ENCODE measurements at regions of chr12 and their contacts with region 1.

Region 1: GRCh38 chr12:120317224-120318105 is 10.1 kb downstream of the PLA2G1B start:
- DNase-seq: peak; percentile 100
- H3K4me3 Mint-ChIP-seq: peak overlapping the region; percentile 90
- H3K27ac Mint-ChIP-seq: peak overlapping the region; percentile 88
- H3K4me1 Mint-ChIP-seq: peaks cover 13% of the 10 kb centered on the region
- H3K27me3 Mint-ChIP-seq: no peaks in the 10 kb centered on the region

Region 2: DNA sequence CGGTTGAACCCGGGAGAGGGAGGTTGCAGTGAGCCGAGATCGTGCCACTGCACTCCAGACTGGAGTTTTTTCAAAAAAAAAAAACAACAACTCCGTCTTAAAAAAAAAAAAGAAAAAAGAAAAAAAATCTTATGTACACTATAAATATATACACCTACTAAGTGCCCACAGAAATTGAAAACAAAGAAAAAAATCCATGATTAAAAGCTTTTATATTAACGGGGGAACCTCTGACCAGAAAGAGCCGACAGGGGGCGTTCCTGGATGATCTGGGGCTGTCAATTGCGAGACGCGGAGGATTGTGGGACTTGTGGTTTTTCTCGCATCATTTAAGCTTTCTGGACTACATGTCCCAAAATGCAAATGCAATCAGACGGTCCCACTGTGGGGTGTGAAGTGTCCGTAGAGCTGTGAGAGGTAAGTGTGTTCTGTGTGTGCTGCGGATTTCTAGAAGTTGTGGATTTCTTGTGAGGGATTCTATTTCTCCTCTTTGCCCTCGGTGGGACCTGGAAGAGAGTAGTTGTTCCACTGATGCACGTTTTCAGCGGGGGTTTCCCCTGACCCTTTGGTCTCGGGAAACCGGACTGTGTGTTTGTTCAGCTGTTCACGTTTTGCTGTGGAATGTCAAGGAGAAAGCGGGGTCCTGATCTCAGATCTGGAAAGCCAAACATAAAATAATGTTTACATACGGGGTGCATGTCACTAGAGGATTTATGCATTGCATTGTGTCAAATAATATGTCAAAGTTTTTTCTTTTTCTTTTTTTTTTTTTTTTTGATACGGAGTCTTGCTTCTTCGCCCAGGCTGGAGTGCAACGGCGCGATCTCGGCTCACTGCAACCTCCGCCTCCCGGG is 15.3 kb before region 1 on chr12 and contains the start of gene SIRT4:
- CTCF ChIA-PET with region 1: interaction called, 25 read pairs
- POLR2A ChIA-PET with region 1: interaction called, 9 read pairs
- intact Hi-C with region 1: loop called (anchors 1 kb)
- DNase-seq: peak; percentile 92
- H3K4me3 Mint-ChIP-seq: peak within 1 kb of the TSS; percentile 90
- H3K27ac Mint-ChIP-seq: peak within 1 kb of the TSS; percentile 70
- H3K4me1 Mint-ChIP-seq: peaks cover 8% of the 10 kb centered on the region
- H3K27me3 Mint-ChIP-seq: no peaks in the 10 kb centered on the region
- total RNA-seq, gene SIRT4: 1.8 to 2.0 TPM

Region 3: GRCh38 chr12:120327593-120327992 is 10.1 kb after region 1 on chr12 and contains the start of gene PLA2G1B:
- CTCF ChIA-PET with region 1: interaction called, 7 read pairs
- POLR2A ChIA-PET with region 1: interaction called, 4 read pairs
- intact Hi-C with region 1: loop called (anchors 1 kb)
- DNase-seq: no peak
- H3K4me3 Mint-ChIP-seq: no peak within 1 kb of the TSS
- H3K27ac Mint-ChIP-seq: no peak within 1 kb of the TSS
- H3K4me1 Mint-ChIP-seq: peaks cover 2% of the 10 kb centered on the region
- H3K27me3 Mint-ChIP-seq: peaks cover 2% of the 10 kb centered on the region
- total RNA-seq, gene PLA2G1B: not detected

Region 4: GRCh38 chr12:120528861-120529525 is 211.5 kb after region 1 on chr12 and contains the start of gene COQ5:
- CTCF ChIA-PET with region 1: no interaction called
- POLR2A ChIA-PET with region 1: no interaction called
- intact Hi-C with region 1: loop called (anchors 2 kb)
- DNase-seq: peak; percentile 91
- H3K4me3 Mint-ChIP-seq: peak within 1 kb of the TSS; percentile 100
- H3K27ac Mint-ChIP-seq: peak within 1 kb of the TSS; percentile 97
- H3K4me1 Mint-ChIP-seq: peaks cover 19% of the 10 kb centered on the region
- H3K27me3 Mint-ChIP-seq: no peaks in the 10 kb centered on the region
- total RNA-seq, gene COQ5: 30.1 to 31.6 TPM